MCF 10A (cell line): ENCODE measurements at regions of chr9 and their contacts with region 1.

Region 1: GRCh38 chr9:94097788-94098414 is 13.6 kb downstream of the PTPDC1 start:
- DNase-seq: peak; percentile 96
- H3K4me3 Mint-ChIP-seq: peak overlapping the region; percentile 35
- H3K27ac Mint-ChIP-seq: peak overlapping the region; percentile 97
- H3K4me1 Mint-ChIP-seq: peaks cover 26% of the 10 kb centered on the region
- H3K27me3 Mint-ChIP-seq: no peaks in the 10 kb centered on the region
- CTCF ChIP-seq: no peak

Region 2: GRCh38 chr9:94084314-94084713 is 13.6 kb before region 1 on chr9 and contains the start of gene PTPDC1:
- CTCF ChIA-PET with region 1: interaction called, 3 read pairs
- POLR2A ChIA-PET with region 1: interaction called, 39 read pairs
- intact Hi-C with region 1: no loop called
- DNase-seq: peak; percentile 32
- H3K4me3 Mint-ChIP-seq: peak within 1 kb of the TSS; percentile 47
- H3K27ac Mint-ChIP-seq: peak within 1 kb of the TSS; percentile 85
- H3K4me1 Mint-ChIP-seq: peaks cover 23% of the 10 kb centered on the region
- H3K27me3 Mint-ChIP-seq: no peaks in the 10 kb centered on the region
- CTCF ChIP-seq: no peak
- total RNA-seq, gene PTPDC1: 42.2 and 49.9 TPM in 2 replicates

Region 3: DNA sequence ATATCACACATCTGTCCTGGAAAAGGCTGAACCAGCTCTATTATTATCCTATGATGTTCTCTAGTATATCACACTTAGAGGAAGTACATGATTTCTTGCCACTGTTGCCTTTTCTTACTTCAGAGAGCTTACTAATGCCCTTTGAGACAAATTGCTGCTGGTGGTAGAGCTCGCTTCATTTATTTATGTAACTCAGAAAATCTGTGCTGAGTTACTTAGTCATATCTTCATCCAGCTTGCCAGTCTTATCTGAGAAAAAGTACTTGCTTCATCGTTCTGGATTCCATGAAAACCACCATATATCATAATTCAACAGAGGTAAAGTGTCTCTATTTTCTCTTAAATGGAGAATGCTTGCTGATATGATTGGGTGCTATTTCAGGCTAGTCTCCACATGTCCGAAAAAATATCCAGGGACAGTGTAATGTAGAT is 12.9 kb after region 1 on chr9:
- CTCF ChIA-PET with region 1: interaction called, 4 read pairs
- POLR2A ChIA-PET with region 1: interaction called, 18 read pairs
- intact Hi-C with region 1: no loop called
- DNase-seq: no peak
- H3K4me3 Mint-ChIP-seq: no peak overlapping the region
- H3K27ac Mint-ChIP-seq: peak overlapping the region; percentile 49
- H3K4me1 Mint-ChIP-seq: no peaks in the 10 kb centered on the region
- H3K27me3 Mint-ChIP-seq: no peaks in the 10 kb centered on the region
- CTCF ChIP-seq: no peak

Region 4: DNA sequence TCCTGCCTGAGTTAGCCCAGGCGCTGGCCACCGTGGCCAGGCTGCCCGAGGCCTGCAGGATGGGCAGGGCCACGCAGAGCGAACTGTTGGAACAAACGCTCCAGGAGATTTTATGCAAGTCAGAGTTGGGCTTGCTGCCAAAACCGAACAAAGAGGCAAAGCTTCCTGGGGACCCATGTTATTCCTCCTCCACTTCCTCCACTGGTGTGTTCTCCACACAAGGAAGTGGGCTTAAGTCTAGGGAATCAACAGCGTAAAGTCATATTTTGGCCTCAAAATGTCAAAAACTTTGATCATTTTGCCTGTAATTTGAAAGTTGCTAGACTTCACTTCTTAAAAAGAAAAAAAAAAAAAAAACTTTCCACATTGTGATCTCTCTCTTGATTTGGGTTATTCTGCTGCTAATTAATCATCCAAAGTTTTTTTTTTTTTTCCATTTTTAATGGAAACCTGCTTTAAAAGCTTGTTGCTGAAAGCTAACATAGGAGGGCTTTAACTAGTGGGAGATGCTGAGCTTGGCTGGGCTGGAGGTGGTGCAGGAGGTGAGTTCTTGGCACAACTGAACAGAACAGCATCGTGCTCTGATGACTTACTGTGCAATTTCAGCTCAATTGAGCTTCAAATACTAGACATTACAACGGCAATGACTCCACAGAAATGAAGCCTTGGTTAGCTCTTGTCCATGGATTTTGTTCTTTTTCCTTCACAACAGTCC is 59.3 kb after region 1 on chr9:
- CTCF ChIA-PET with region 1: no interaction called
- POLR2A ChIA-PET with region 1: interaction called, 23 read pairs
- intact Hi-C with region 1: no loop called
- DNase-seq: peak; percentile 93
- H3K4me3 Mint-ChIP-seq: no peak overlapping the region
- H3K27ac Mint-ChIP-seq: peak overlapping the region; percentile 96
- H3K4me1 Mint-ChIP-seq: peaks cover 17% of the 10 kb centered on the region
- H3K27me3 Mint-ChIP-seq: no peaks in the 10 kb centered on the region
- CTCF ChIP-seq: no peak

Region 5: DNA sequence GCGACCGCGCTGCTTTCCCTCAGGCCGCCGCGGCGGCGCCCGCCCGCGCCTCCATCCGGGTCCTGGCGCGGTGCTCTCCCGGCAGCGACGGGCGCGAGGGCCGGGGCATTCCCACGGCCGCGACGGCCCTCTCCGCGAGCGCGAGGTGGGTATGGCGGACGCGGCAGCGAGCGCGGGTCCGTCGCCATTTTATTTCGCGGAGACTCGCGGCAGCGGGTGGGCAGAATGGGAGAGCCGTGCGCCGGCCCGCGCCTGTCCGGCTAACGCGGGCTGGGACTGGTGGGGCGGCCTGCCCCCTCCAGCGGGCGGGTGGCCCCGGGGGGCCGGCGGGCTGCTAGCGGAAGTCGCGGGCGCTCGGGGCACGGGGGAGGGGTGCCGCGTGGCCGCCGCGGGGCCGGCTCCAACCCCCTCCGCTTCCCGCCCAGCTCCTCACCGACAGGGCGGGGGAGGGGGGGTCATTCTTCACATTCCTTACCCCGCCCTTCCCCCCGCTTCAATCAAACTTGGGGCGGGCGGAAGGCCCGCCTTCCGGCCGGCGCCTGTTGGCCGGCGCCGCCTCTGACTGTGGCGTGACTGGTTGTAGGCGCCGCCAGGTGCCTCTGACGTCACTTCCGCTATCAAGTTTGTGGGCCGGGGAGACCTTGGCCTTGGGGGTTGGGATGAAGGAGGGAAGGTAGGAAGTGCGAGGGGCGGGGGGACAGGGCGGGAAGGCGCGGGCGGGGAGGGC is 68.5 kb after region 1 on chr9:
- CTCF ChIA-PET with region 1: interaction called, 4 read pairs
- POLR2A ChIA-PET with region 1: interaction called, 26 read pairs
- intact Hi-C with region 1: loop called (anchors 1 kb)
- DNase-seq: peak; percentile 99
- H3K4me3 Mint-ChIP-seq: peak overlapping the region; percentile 83
- H3K27ac Mint-ChIP-seq: peak overlapping the region; percentile 86
- H3K4me1 Mint-ChIP-seq: peaks cover 22% of the 10 kb centered on the region
- H3K27me3 Mint-ChIP-seq: no peaks in the 10 kb centered on the region
- CTCF ChIP-seq: no peak

Region 6: GRCh38 chr9:94611638-94612068 is 513.8 kb after region 1 on chr9:
- CTCF ChIA-PET with region 1: no interaction called
- POLR2A ChIA-PET with region 1: no interaction called
- intact Hi-C with region 1: no loop called
- DNase-seq: no peak
- H3K4me3 Mint-ChIP-seq: no peak overlapping the region
- H3K27ac Mint-ChIP-seq: no peak overlapping the region
- H3K4me1 Mint-ChIP-seq: no peaks in the 10 kb centered on the region
- H3K27me3 Mint-ChIP-seq: no peaks in the 10 kb centered on the region
- CTCF ChIP-seq: no peak